ENCODE measurements at regions of chr10 and their contacts with region 1.

Region 1: DNA sequence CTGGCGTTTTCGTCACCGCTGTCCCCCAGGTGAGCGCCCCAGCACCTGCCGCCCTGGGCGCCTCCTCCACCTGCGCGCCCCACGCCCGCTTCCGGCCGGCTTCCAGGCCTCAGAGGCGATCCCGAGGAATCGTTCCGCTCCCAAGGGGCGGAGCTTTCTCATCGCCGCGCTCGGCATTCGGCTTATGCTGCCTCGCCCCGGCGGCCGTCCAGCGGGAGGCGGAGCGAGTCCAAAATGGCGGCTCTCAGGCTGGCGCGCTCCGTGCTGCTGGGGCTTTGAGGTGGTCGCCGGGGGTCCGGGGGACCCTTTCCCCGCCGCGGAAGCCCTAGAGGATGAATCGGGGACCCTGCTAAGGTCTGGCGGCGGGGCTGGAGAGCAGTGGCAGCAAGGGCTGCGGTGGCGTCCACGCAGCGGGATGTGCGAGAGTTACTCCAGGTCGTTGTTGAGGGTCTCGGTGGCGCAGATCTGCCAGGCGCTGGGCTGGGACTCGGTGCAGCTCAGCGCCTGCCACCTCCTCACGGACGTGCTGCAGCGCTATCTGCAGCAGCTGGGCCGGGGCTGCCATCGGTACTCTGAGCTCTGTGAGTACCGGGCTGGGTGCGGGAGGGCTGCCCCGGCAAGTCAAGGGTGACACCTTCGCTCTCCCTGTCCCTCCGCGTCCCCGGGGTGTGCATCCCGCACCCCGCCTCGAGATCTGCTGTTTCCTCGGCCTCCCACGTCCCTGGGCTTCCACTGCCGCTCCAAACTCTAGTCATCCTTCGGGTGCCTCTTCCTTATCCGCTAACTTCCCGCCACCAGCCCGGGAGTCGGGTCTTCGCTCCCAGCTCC is at the start of gene TAF3:
- DNase-seq: peak; percentile 95
- H3K4me3 Mint-ChIP-seq: peak within 1 kb of the TSS; percentile 98
- H3K27ac Mint-ChIP-seq: peak within 1 kb of the TSS; percentile 70
- H3K4me1 Mint-ChIP-seq: peaks cover 36% of the 10 kb centered on the region
- H3K27me3 Mint-ChIP-seq: peaks cover 2% of the 10 kb centered on the region
- total RNA-seq, gene TAF3: 12.2 to 12.3 TPM

Region 2: DNA sequence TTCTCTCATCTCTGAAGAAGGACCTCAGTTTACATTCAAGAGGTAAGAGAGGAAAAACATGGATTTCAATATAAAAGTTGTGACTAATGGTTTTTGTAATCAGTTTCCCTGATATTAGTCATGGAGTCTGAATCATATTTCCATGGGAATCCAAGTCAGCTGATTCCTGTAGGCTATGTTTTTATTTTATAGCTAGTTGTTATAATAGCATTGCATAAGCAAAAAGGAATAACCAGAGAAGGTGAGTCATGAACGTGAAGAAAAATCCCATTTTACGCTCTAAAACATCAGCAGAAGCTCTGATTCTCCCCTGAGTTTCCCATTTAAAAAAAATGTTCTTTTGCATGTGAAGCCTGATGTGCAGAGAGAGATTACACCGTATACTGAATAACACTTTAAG is 706.9 kb before region 1 on chr10:
- CTCF ChIA-PET with region 1: no interaction called
- POLR2A ChIA-PET with region 1: no interaction called
- intact Hi-C with region 1: no loop called
- DNase-seq: no peak
- H3K4me3 Mint-ChIP-seq: no peak overlapping the region
- H3K27ac Mint-ChIP-seq: no peak overlapping the region
- H3K4me1 Mint-ChIP-seq: peaks cover 9% of the 10 kb centered on the region
- H3K27me3 Mint-ChIP-seq: peaks cover 2% of the 10 kb centered on the region

Region 3: GRCh38 chr10:7750222-7750621 is 68.3 kb before region 1 on chr10:
- CTCF ChIA-PET with region 1: no interaction called
- POLR2A ChIA-PET with region 1: no interaction called
- intact Hi-C with region 1: no loop called
- DNase-seq: no peak
- H3K4me3 Mint-ChIP-seq: no peak overlapping the region
- H3K27ac Mint-ChIP-seq: no peak overlapping the region
- H3K4me1 Mint-ChIP-seq: no peaks in the 10 kb centered on the region
- H3K27me3 Mint-ChIP-seq: no peaks in the 10 kb centered on the region

Region 4: DNA sequence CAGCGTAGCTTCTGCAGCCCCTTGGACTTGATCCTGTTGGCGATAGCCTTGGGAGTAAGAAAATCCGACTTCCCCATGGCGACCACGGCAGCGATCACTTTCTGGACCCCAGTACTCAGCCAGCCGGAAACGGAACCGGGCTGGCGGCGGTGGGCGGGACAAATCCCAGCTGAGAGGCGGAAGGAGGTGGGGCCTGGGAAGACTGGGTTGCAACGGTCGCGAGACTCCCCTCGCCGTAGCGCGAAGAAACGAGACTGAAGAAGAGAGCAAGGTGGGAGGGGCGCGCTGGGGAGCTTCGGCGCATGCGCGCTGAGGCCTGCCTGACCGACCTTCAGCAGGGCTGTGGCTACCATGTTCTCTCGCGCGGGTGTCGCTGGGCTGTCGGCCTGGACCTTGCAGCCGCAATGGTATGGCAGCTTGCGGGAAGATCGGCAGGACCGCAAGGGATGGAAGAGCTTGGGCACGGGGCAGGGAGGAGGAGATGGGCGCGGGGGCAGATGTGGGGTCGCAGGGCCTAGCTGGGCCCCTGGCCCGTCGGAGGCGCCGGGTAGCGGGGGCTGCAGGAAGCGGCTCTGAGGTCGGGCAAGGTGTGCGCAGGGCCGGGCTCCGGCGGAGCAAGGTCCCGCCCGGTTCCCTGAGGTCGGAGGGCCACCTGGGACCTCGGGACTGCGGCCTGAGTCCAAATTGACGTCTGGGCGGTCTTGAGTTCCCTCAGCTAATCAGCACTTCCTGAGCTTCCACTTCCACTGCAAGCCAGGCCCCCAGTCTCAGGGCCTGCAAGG is 30.5 kb before region 1 on chr10 and contains the starts of genes ATP5F1C and KIN:
- CTCF ChIA-PET with region 1: interaction called, 5 read pairs
- POLR2A ChIA-PET with region 1: interaction called, 29 read pairs
- intact Hi-C with region 1: loop called (anchors 1 kb)
- DNase-seq: peak; percentile 99
- H3K4me3 Mint-ChIP-seq: no peak within 1 kb of the TSS
- H3K27ac Mint-ChIP-seq: no peak within 1 kb of the TSS
- H3K4me1 Mint-ChIP-seq: peaks cover 49% of the 10 kb centered on the region
- H3K27me3 Mint-ChIP-seq: no peaks in the 10 kb centered on the region
- total RNA-seq, gene ATP5F1C: 281 to 295 TPM
- total RNA-seq, gene KIN: 10.9 to 11.5 TPM

Region 5: DNA sequence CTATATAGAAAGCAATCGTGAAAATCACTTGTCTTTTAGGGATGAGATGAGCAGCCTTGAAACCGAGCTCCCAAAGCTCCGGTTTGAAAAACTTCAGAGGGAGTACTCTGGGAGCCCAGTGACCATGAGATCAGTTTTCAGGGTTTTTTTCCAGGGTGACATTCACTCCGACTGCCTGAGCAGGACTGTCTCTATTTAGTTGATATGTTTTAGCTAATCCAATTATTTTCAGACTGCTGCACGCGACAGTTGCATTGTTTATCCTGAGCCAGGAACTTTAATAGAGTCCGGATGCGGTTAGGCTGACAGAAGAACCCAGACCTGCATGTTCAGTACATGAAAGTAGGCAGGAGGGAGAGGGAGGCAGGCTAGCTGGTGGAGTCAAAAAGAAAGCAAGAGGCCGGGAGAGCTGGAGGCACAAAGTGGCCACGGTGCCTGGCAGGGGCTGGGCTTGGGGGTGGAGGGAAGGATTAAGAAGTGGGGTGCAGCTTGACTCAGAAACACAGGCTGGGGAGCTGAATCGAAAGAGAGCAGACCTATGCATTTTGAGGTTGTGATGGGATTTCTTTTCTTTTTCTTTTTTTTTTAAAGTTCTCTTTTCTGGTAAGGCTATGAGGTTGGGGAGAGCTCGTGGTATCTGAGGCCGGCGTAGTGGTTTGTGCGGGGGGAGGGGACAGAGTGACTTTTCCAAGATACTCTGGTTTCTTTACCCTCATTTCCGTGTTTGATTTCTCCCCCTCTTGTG is 241.6 kb after region 1 on chr10:
- CTCF ChIA-PET with region 1: no interaction called
- POLR2A ChIA-PET with region 1: no interaction called
- intact Hi-C with region 1: no loop called
- DNase-seq: peak; percentile 87
- H3K4me3 Mint-ChIP-seq: peak overlapping the region; percentile 98
- H3K27ac Mint-ChIP-seq: peak overlapping the region; percentile 99
- H3K4me1 Mint-ChIP-seq: peaks cover 75% of the 10 kb centered on the region
- H3K27me3 Mint-ChIP-seq: no peaks in the 10 kb centered on the region

Measured in activated CD4-positive, alpha-beta memory T cell treated with anti-CD3 and anti-CD28 coated beads for 36 hours (primary cell).